ENCODE measurements at regions of chr1 and their contacts with region 1.

Region 1: DNA sequence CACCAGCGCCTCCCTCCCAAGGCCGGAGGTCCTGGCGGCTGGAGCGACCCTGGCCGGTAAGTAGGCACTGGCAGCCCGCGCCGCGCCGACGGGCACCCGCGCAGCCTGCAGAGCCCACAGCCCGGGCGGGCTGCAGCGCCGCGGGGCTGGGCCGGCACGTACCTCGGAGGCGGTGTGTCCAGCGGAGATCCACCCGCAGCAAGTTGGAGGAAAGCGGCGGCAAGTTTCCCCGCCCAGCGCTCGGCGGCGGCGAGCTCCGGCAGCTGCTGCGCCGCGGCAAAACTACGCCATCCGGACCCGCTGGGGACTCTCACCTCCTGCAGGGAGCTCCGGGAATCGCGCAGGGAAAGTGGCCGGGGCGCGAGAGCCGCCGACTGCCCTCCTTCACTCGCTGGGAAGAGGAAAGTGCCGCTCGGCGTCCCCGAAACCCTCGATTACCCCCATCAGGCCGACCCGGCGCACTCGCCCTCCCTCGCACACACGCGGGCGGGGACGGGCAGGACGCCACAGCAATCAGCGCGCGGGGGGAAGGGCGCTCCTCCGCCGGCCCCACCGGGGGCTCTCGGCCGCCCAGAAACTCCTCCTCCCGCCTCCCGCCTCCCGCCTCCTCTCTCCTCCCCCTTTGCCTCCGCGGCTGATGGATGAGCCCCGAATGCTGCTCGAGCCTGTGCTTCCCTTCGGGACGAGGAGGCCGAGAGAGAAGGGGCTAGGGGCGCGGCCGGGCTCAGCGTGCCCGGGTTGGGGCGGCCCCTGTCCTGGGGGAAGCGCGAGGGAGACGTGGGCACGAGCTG is at the start of gene TGFBR3:
- DNase-seq: peak; percentile 96 to 98 (median 98)
- H3K4me3 ChIP-seq: peak within 1 kb of the TSS; percentile 92
- H3K27ac ChIP-seq: peak within 1 kb of the TSS; percentile 86 to 94
- H3K4me1 ChIP-seq: peaks cover 9% of the 10 kb centered on the region
- H3K27me3 ChIP-seq: no peaks in the 10 kb centered on the region
- CTCF ChIP-seq: peak; percentile 14 to 71 (median 55)
- EP300 ChIP-seq: peak; percentile 51
- POLR2A ChIP-seq: peak; percentile 78
- total RNA-seq, gene TGFBR3: 92.4 to 442 (median 174) TPM

Region 2: DNA sequence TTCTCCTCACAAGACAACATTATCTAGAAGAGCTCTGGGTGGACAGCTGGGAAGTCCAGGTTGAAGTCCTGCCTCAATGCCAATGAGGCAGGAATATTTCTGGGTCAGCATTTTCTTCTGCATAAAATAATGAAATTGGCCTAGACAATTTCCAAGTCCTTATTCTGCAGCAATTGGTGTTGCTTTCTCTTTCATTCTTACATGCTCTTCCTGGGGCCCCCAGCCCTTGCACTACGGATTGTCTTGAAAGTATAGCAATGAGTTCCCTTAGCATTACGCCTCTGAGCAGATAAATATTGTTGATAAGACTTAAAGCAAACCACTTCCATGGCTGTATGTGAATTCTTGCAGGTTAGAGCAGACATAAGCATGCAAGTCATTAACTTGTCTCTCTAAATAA is 188.5 kb before region 1 on chr1:
- intact Hi-C with region 1: loop called in 1 of 4 experiments (anchors 10 kb)
- DNase-seq: no peak
- H3K4me3 ChIP-seq: no peak overlapping the region
- H3K27ac ChIP-seq: peak overlapping the region; percentile 39 to 85
- H3K4me1 ChIP-seq: peaks cover 17% of the 10 kb centered on the region
- H3K27me3 ChIP-seq: no peaks in the 10 kb centered on the region
- CTCF ChIP-seq: no peak
- EP300 ChIP-seq: no peak
- POLR2A ChIP-seq: no peak

Region 3: GRCh38 chr1:91707890-91708218 is 178.1 kb before region 1 on chr1:
- intact Hi-C with region 1: no loop called
- DNase-seq: no peak
- H3K4me3 ChIP-seq: no peak overlapping the region
- H3K27ac ChIP-seq: no peak overlapping the region
- H3K4me1 ChIP-seq: peaks cover 5% of the 10 kb centered on the region
- H3K27me3 ChIP-seq: no peaks in the 10 kb centered on the region
- CTCF ChIP-seq: no peak
- EP300 ChIP-seq: no peak
- POLR2A ChIP-seq: no peak

Region 4: DNA sequence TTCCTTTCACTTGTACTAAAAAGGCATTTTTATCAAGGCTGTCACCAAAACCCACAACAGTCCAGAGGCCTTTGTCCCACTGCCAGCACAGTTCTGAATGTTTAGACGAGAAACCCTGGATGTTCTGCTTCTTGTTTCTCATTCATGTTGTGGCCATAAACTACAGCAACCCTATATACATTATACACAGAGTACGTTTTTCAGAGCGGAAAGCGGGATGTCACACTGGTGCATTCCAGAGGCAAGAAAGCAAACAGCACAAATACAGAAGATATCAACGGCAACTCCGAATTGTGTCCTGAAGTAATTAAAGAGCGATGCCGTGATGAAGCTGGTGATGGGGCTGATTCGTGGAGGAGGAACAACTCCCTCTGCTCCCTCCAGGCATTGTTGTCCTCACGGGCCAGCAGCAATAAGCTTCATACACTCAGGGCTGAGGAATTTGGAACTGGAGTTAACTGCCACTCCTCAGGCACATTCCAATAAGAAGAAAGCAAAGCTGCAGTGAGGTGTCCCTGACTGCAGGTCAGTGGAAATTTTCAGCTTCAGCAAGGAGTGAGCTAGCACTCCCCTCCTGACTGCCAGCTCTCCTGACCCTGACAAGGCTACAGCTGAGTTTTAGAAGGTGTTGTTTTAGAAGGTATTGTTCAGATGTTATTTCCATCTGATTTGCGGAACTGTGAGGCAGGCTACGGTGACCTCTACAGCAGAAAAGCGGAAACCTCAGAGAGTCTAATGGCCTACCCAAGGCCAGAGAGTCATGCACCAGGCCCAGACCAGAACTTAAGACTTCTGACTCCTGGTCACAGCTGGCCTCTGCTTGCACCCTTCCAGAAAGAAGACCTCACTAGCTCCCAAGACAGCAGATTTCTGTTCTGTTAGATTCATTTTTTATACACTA is 148.9 kb before region 1 on chr1:
- intact Hi-C with region 1: loop called in 1 of 4 experiments (anchors 5 kb)
- DNase-seq: peak in 3 of 5 donors; percentile 46 to 57 (median 53)
- H3K4me3 ChIP-seq: no peak overlapping the region
- H3K27ac ChIP-seq: peak overlapping the region; percentile 18 to 56
- H3K4me1 ChIP-seq: peaks cover 25% of the 10 kb centered on the region
- H3K27me3 ChIP-seq: no peaks in the 10 kb centered on the region
- CTCF ChIP-seq: no peak
- EP300 ChIP-seq: no peak
- POLR2A ChIP-seq: no peak

Region 5: DNA sequence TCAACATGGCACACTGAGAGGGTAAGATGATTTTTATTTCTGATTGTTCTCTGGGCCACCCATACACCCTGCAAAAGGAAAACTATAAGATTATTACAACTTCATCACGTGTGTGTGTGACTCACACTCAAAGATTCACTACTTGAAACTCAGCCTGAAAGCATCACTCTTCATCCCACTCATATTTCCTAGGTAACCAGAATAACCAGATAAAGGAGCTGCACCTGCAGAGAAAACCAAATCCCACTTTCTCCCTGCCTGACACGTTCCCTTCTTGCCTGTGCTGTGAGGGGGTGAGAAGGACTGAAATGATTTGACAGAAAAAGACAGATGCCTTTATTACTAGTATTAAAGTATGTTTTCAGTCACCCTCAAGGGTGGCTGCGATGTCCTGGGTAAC is 131.6 kb before region 1 on chr1:
- intact Hi-C with region 1: no loop called
- DNase-seq: peak in 1 of 5 donors; percentile 19
- H3K4me3 ChIP-seq: no peak overlapping the region
- H3K27ac ChIP-seq: peak overlapping the region; percentile 68 to 70
- H3K4me1 ChIP-seq: peaks cover 26% of the 10 kb centered on the region
- H3K27me3 ChIP-seq: no peaks in the 10 kb centered on the region
- CTCF ChIP-seq: no peak
- EP300 ChIP-seq: no peak
- POLR2A ChIP-seq: no peak

Region 6: DNA sequence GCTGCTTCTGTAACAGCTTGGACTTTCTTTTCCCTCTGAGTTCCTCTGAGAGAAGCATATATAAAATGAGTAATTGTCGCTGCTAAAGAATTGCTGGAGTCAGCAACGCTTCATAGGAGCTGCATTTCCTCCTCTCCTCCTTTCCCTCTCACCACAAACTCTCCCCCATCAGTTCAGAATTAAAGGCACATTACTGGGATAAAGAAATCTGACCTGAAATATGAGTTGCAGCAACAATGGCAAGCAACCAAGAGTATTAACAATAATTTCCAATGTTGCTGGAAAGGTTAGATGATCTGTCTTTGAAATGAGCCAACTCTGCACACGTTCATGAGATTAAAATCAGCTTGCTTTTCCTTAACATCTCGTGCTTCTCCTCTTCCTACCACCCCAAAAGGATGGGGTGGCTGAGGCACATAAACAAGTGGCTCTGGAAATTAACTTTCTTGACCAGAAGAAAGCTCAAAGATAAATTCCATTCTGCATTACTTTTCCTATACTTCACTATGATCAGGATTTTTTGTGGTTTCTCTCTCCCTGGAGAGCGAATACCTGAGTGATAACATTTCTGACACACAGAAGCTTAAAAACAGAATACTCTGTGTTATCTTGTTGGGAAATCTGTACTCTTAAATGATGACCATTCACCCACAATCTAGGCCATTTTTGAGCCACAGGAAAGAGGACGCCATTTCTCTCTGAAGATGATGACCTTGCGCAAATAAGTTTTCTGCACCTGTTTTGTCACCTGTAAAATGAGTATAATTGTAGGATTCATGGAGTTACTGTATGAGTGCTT is 90.1 kb before region 1 on chr1:
- intact Hi-C with region 1: loop called in 1 of 4 experiments (anchors 10 kb)
- DNase-seq: no peak
- H3K4me3 ChIP-seq: no peak overlapping the region
- H3K27ac ChIP-seq: no peak overlapping the region
- H3K4me1 ChIP-seq: peaks cover 22% of the 10 kb centered on the region
- H3K27me3 ChIP-seq: no peaks in the 10 kb centered on the region
- CTCF ChIP-seq: no peak
- EP300 ChIP-seq: no peak
- POLR2A ChIP-seq: no peak

Region 7: DNA sequence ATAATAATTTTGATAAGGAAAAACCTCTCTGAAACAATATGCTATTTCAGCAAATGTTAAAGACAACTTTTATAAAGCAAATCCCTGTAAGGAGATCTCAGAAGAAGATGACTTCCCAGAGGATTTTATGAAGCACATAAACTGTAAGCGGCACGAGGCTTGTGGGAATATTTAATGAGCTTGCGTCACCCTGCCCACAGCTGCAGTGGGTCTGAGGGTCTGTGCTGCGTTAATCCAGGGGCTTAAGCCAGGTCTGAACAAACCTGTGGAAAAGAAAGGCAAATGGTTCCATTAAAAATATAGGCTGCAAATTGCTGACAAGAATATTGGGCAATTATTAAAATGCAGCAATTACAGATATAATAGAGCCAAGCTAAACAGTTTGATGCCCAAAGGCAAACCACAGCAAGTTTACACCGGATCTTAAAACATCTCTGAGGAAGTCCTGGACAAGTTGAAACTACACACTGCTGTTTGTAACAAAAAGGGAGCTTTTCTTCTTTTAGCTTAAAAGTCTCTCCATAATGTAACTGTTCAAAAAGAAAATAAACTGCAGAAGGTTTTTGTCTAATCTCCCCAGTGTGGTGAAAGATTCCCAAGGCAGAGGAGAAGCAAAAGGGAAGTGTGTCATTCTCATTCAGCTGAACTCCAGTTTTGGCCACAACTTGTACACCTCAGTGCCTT is 21.8 kb before region 1 on chr1:
- intact Hi-C with region 1: no loop called
- DNase-seq: no peak
- H3K4me3 ChIP-seq: no peak overlapping the region
- H3K27ac ChIP-seq: no peak overlapping the region
- H3K4me1 ChIP-seq: peaks cover 8% of the 10 kb centered on the region
- H3K27me3 ChIP-seq: no peaks in the 10 kb centered on the region
- CTCF ChIP-seq: no peak
- EP300 ChIP-seq: no peak
- POLR2A ChIP-seq: no peak